GM12878 (cell line): ENCODE measurements at regions of chr10 and their contacts with region 1.

Region 1: DNA sequence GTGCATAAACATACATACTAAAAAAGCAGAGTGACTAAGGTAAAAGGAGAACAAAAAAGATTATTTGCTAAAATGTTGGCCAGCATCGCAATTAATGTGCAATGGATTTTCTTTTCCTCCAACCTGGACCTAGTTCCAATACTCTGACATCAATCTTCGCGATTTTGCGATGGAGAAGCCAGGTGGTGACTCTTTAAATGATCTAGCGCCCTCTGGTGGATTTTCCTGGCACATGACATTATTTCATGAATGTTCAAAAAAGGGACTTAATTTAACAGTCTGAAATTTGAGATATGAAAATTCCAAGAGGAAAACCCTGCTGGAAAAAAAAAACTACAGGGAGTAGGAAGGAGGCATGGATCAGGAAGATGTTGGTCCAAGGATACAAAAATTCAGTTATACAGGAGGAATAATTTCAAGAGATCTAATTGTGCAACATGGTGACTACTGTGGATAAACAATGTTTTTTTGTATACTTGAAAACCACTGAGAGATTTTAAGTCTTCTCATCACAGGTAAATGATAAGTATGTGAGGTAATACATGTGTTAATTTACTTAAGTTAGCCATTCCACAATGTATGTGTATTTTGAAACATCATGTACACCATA is 4.3 kb upstream of the KCNMA1 start:
- DNase-seq: no peak
- ATAC-seq: peak; percentile 27
- H3K4me3 ChIP-seq: no peak overlapping the region
- H3K27ac ChIP-seq: no peak overlapping the region
- H3K4me1 ChIP-seq: 0 out of 2 replicates have a peak, but pooled peaks cover 2% of the 10 kb centered on the region
- H3K27me3 ChIP-seq: no peaks in the 10 kb centered on the region; a peak in 1 of 4 replicates
- CTCF ChIP-seq: peak; percentile 58 to 81 (median 72); a peak in 5 of 6 replicates
- EP300 ChIP-seq: no peak
- POLR2A ChIP-seq: no peak
- RAD21 ChIP-seq: peak; percentile 92

Region 2: DNA sequence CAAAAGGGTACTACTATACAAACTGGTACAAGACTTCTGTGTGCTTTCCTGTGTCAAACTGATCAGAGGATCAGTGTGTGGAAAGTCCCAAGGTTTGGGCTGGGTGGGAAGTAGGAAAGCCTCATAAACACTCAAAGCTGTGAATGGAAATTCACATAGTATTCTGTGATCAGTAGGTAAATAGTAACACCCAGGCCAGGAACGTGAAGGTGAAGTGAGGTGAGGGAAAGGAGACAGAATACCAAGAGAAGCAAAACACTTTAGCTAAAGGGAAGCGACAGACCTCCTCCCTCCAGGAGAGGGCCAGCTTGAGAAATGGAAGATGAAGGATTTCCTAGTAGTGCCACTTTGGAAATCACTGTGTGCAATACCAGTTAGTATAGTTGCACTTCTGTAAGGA is 456.2 kb before region 1 on chr10:
- CTCF ChIA-PET with region 1: interaction called, 11 read pairs
- POLR2A ChIA-PET with region 1: no interaction called
- RAD21 ChIA-PET with region 1: no interaction called
- SMC1A ChIA-PET with region 1: interaction called, 4 read pairs
- in situ Hi-C with region 1: no loop called
- intact Hi-C with region 1: no loop called
- DNase-seq: no peak
- ATAC-seq: peak; percentile 25; the same call in 2 of the 3 replicates
- H3K4me3 ChIP-seq: no peak overlapping the region
- H3K27ac ChIP-seq: no peak overlapping the region
- H3K4me1 ChIP-seq: no peaks in the 10 kb centered on the region
- H3K27me3 ChIP-seq: no peaks in the 10 kb centered on the region
- CTCF ChIP-seq: no peak
- EP300 ChIP-seq: no peak
- POLR2A ChIP-seq: no peak
- RAD21 ChIP-seq: no peak

Region 3: DNA sequence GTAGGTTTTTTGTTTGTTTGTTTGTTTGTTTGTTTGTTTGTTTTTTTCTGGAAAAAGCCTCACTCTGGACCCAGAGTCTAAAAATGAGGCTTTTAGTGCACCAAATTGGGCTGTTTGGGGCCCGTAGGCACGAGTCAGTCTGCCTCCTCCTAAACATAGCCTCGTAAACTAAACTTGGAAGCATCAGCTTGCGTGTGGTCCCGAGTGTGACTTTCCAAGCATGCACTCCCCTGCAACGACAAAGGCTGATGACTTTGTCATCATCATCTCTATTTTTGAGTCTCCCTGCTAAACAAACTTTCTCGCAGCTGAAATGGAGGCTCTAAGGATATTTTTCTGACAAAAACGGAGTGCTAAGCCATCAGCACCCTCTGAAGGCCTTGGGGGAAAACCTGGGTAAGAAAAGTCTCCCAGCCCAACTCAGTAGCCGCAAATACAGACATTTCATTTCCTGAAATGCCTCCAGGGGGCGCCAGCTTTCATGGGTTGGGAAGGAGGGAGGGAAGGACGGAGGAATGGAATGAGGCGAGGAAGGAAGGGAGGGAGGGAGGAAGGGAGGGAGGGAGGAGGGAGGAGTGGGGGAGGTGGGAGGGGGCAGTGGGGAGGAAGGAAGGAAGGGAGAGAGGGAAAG is 250.2 kb before region 1 on chr10:
- CTCF ChIA-PET with region 1: interaction called, 134 read pairs
- POLR2A ChIA-PET with region 1: no interaction called
- RAD21 ChIA-PET with region 1: interaction called, 26 read pairs
- SMC1A ChIA-PET with region 1: interaction called, 170 read pairs
- in situ Hi-C with region 1: loop called (anchors 5 kb)
- intact Hi-C with region 1: loop called (anchors 2 kb)
- DNase-seq: no peak
- ATAC-seq: peak; percentile 84
- H3K4me3 ChIP-seq: no peak overlapping the region
- H3K27ac ChIP-seq: no peak overlapping the region
- H3K4me1 ChIP-seq: no peaks in the 10 kb centered on the region
- H3K27me3 ChIP-seq: no peaks in the 10 kb centered on the region; a peak in 1 of 4 replicates
- CTCF ChIP-seq: peak; percentile 51 to 73 (median 72)
- EP300 ChIP-seq: no peak
- POLR2A ChIP-seq: no peak
- RAD21 ChIP-seq: peak; percentile 87

Region 4: DNA sequence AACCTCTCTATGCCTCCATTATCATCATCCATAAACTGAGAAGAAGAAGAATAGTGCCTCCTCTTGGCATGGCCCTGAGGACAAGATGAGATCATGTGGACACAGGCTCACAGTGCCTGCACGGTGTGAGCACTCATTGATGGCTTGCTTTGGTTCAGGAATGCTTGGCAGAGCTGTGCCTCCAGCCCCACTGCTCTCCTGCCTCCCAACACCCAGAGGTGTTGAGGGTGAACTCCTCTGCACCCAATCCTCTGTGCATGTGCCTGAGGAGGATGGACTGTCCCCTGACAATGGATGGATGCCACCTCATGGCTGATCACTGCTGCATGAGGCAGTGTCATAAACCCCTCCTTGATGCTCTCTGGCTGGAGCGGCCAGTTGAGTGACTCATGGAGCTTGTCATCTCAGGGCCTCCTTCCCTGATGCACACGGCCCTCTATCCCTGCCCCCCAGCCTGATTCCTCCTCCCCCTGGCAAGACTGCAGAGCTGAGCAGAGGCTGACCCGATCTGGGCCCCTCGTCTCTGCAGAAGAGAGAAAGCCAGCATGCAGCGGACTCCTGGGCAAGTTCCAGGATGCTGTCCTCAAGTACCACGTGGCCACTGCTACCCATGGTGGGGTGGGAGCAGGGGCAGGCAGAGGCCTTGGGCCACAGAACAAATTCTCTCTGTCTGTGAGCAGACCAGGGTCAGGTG is 140.6 kb before region 1 on chr10:
- CTCF ChIA-PET with region 1: interaction called, 14 read pairs
- POLR2A ChIA-PET with region 1: interaction called, 3 read pairs
- RAD21 ChIA-PET with region 1: interaction called, 33 read pairs
- SMC1A ChIA-PET with region 1: interaction called, 17 read pairs
- in situ Hi-C with region 1: no loop called
- intact Hi-C with region 1: no loop called
- DNase-seq: no peak
- ATAC-seq: peak; percentile 32
- H3K4me3 ChIP-seq: no peak overlapping the region
- H3K27ac ChIP-seq: no peak overlapping the region
- H3K4me1 ChIP-seq: peaks cover 11% of the 10 kb centered on the region
- H3K27me3 ChIP-seq: no peaks in the 10 kb centered on the region
- CTCF ChIP-seq: no peak
- EP300 ChIP-seq: no peak
- POLR2A ChIP-seq: no peak
- RAD21 ChIP-seq: no peak

Region 5: DNA sequence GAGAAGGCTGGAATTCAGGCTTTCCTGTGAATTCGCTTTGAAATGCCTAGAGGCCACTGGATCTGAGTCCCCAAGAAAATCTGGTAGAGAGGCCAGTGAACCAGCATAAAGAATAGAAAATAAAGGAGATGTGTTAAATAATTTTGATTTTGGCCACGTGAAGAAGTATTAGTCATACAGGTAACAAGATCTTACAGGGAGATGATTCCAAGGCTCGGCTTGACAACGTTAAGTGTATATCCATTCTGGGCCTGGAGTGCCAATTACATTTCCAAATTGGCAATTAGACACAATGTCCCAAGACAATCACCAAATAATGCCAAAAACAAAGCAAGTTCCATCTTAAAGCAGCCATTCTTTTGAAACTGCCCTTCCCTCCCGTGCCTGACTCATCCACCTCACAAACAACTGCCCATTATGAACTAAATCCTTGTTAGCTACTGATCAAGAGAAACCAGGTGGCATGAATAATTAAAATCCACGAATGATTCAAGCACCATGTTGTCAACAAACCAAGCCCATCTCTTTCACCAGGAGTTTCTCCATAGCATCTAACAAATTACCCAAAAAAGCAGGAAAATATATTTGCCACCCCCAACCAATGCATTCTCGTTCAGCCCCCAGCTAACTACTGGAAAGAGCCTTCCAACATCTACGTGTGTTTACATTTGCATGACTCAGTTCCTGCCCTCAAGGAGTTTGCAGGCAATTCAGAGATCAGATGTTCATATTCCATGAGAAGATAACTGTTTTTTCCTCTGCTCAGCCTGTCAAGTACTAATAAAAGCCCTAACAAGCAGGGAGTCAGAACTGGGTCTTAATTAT is 12.8 kb before region 1 on chr10:
- CTCF ChIA-PET with region 1: interaction called, 24 read pairs
- POLR2A ChIA-PET with region 1: interaction called, 4 read pairs
- RAD21 ChIA-PET with region 1: interaction called, 14 read pairs
- SMC1A ChIA-PET with region 1: interaction called, 20 read pairs
- in situ Hi-C with region 1: no loop called
- intact Hi-C with region 1: no loop called
- DNase-seq: no peak
- ATAC-seq: no peak
- H3K4me3 ChIP-seq: no peak overlapping the region
- H3K27ac ChIP-seq: no peak overlapping the region
- H3K4me1 ChIP-seq: no peaks in the 10 kb centered on the region
- H3K27me3 ChIP-seq: no peaks in the 10 kb centered on the region
- CTCF ChIP-seq: no peak
- EP300 ChIP-seq: no peak
- POLR2A ChIP-seq: no peak
- RAD21 ChIP-seq: no peak

Region 6: DNA sequence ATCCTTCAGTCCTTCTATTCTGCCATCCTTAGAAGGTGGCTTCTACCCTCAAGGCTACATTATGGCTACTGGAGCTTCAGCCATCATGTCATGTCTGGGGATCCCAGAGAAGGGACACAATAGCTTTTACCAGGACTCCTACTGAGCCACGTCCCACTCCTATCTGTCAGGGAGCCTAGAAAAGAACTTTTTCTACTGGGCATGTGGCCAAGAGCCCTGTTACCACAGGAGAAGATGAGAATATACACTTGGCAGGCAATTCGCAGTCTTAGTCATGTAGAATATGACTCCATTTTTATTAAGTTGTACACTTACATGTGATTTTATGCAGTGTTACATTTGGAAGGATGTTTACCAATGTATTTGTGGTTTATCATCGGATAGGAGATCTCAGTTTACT is 60.3 kb after region 1 on chr10:
- CTCF ChIA-PET with region 1: interaction called, 8 read pairs
- POLR2A ChIA-PET with region 1: interaction called, 4 read pairs
- RAD21 ChIA-PET with region 1: interaction called, 290 read pairs
- SMC1A ChIA-PET with region 1: interaction called, 291 read pairs
- in situ Hi-C with region 1: no loop called
- intact Hi-C with region 1: no loop called
- DNase-seq: no peak
- ATAC-seq: peak; percentile 59
- H3K4me3 ChIP-seq: no peak overlapping the region
- H3K27ac ChIP-seq: peak overlapping the region; percentile 35; the same call in 1 of the 2 replicates
- H3K4me1 ChIP-seq: peaks cover 5% of the 10 kb centered on the region
- H3K27me3 ChIP-seq: no peaks in the 10 kb centered on the region
- CTCF ChIP-seq: no peak
- EP300 ChIP-seq: no peak
- POLR2A ChIP-seq: no peak
- RAD21 ChIP-seq: no peak